IMR-90 (cell line): ENCODE measurements at regions of chr18 and their contacts with region 1.

Region 1: DNA sequence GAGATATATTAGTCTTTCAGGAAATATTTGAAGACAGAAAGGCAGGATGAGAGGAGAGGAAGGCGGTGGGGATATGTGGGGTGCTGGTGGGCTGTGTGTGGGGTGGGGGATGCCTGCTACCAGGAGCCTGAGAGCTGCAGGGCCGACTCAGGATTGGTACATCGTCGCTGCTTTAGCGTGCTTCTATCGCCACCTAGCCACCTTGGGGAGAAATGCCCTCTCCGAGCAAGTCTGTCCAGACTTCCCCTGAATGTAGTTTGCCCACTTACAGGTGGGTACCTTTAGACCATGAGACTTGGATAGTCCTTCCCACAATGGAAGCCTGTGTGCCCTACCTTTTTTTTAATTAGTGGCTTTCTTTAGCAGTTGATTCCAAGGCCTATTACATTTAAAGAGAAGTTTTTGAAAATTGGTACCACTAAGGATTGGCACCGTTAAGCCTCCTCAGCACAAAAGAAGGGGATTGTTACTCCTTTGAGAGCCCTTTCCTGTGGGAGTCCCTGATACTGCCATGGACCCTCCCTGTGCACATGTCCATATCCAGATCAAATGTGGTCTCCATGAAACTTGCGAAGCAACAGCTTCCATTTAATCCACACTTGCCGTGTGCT is 114.1 kb upstream of the NDUFV2 start:
- DNase-seq: peak; percentile 69
- ATAC-seq: peak; percentile 86
- H3K4me3 ChIP-seq: no peak overlapping the region
- H3K27ac ChIP-seq: no peak overlapping the region
- H3K4me1 ChIP-seq: peaks cover 14% of the 10 kb centered on the region
- H3K27me3 ChIP-seq: no peaks in the 10 kb centered on the region
- CTCF ChIP-seq: peak; percentile 89
- POLR2A ChIP-seq: peak; percentile 42; the same call in 1 of the 2 replicates
- RAD21 ChIP-seq: peak; percentile 98

Region 2: DNA sequence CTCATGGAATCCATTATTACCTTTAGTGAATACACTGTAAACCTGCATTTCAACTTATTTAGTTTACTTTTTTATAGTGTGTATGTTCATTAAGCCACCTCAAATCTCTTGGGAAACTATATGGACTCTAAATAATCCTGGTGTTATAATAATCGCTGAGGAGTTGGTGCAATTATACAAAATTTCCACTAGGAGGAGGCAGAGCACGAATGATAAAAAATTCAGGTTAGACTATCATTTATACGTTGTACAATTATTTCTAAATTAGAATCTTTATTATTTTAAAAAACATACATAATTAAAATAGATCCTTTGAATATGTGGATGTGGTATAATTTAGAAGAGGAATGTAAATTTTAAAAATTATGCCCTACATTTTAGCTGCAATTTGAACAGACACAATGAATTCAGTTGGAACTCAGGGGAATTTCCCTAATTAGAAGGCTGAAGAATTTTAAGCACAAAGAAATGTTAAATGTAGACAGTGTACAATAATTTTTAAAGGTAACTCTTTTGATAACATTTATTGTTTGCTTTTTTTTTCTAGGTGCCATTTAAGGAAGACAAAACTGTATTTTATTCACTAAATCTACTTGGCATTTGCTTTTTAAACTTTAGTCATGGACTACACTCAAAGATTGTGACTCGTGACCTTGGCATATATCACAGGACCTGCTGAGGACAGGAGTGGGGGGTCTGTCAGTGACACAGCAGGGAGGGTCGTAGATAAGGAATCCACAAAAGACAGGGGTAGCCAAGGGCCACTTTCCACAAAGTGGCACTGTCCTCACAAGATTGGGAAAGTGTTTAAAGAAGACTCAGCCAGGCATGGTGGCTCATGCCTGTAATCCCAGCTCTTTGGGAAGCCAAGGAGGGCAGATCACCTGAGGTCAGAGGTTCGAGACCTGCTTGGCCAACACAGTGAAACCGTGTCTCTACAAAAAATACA is 333.6 kb before region 1 on chr18:
- CTCF ChIA-PET with region 1: interaction called, 19 read pairs
- POLR2A ChIA-PET with region 1: no interaction called
- dilution Hi-C with region 1: no loop called
- in situ Hi-C with region 1: loop called (anchors 5 kb)
- intact Hi-C with region 1: loop called (anchors 1 kb)
- DNase-seq: peak; percentile 34
- ATAC-seq: peak; percentile 82
- H3K4me3 ChIP-seq: no peak overlapping the region
- H3K27ac ChIP-seq: no peak overlapping the region
- H3K4me1 ChIP-seq: peaks cover 2% of the 10 kb centered on the region
- H3K27me3 ChIP-seq: no peaks in the 10 kb centered on the region; the same call in 1 of the 2 replicates
- CTCF ChIP-seq: peak; percentile 88
- POLR2A ChIP-seq: no peak
- RAD21 ChIP-seq: peak; percentile 77

Region 3: GRCh38 chr18:8696749-8697211 is 291.6 kb before region 1 on chr18:
- CTCF ChIA-PET with region 1: interaction called, 4 read pairs
- POLR2A ChIA-PET with region 1: no interaction called
- dilution Hi-C with region 1: loop called (anchors 25 kb)
- in situ Hi-C with region 1: loop called (anchors 5 kb)
- intact Hi-C with region 1: loop called (anchors 1 kb)
- DNase-seq: peak; percentile 48
- ATAC-seq: peak; percentile 76
- H3K4me3 ChIP-seq: no peak overlapping the region
- H3K27ac ChIP-seq: no peak overlapping the region
- H3K4me1 ChIP-seq: peaks cover 7% of the 10 kb centered on the region
- H3K27me3 ChIP-seq: no peaks in the 10 kb centered on the region
- CTCF ChIP-seq: peak; percentile 81
- POLR2A ChIP-seq: no peak
- RAD21 ChIP-seq: peak; percentile 81

Region 4: GRCh38 chr18:8747440-8747937 is 240.9 kb before region 1 on chr18:
- CTCF ChIA-PET with region 1: no interaction called
- POLR2A ChIA-PET with region 1: no interaction called
- dilution Hi-C with region 1: no loop called
- in situ Hi-C with region 1: no loop called
- intact Hi-C with region 1: loop called (anchors 5 kb)
- DNase-seq: peak; percentile 96
- ATAC-seq: peak; percentile 76
- H3K4me3 ChIP-seq: no peak overlapping the region
- H3K27ac ChIP-seq: peak overlapping the region; percentile 96
- H3K4me1 ChIP-seq: peaks cover 56% of the 10 kb centered on the region
- H3K27me3 ChIP-seq: no peaks in the 10 kb centered on the region
- CTCF ChIP-seq: no peak
- POLR2A ChIP-seq: peak; percentile 67
- RAD21 ChIP-seq: no peak

Region 5: GRCh38 chr18:8882632-8883408 is 105.5 kb before region 1 on chr18:
- CTCF ChIA-PET with region 1: no interaction called
- POLR2A ChIA-PET with region 1: no interaction called
- dilution Hi-C with region 1: no loop called
- in situ Hi-C with region 1: no loop called
- intact Hi-C with region 1: no loop called
- DNase-seq: no peak
- ATAC-seq: no peak
- H3K4me3 ChIP-seq: no peak overlapping the region
- H3K27ac ChIP-seq: no peak overlapping the region
- H3K4me1 ChIP-seq: no peaks in the 10 kb centered on the region
- H3K27me3 ChIP-seq: no peaks in the 10 kb centered on the region
- CTCF ChIP-seq: no peak
- POLR2A ChIP-seq: no peak
- RAD21 ChIP-seq: no peak; the same call in 1 of the 2 replicates

Region 6: GRCh38 chr18:8899000-8899399 is 89.4 kb before region 1 on chr18:
- CTCF ChIA-PET with region 1: no interaction called
- POLR2A ChIA-PET with region 1: no interaction called
- dilution Hi-C with region 1: no loop called
- in situ Hi-C with region 1: no loop called
- intact Hi-C with region 1: no loop called
- DNase-seq: no peak
- ATAC-seq: no peak
- H3K4me3 ChIP-seq: no peak overlapping the region
- H3K27ac ChIP-seq: no peak overlapping the region
- H3K4me1 ChIP-seq: no peaks in the 10 kb centered on the region
- H3K27me3 ChIP-seq: no peaks in the 10 kb centered on the region
- CTCF ChIP-seq: no peak
- POLR2A ChIP-seq: no peak
- RAD21 ChIP-seq: no peak

Region 7: DNA sequence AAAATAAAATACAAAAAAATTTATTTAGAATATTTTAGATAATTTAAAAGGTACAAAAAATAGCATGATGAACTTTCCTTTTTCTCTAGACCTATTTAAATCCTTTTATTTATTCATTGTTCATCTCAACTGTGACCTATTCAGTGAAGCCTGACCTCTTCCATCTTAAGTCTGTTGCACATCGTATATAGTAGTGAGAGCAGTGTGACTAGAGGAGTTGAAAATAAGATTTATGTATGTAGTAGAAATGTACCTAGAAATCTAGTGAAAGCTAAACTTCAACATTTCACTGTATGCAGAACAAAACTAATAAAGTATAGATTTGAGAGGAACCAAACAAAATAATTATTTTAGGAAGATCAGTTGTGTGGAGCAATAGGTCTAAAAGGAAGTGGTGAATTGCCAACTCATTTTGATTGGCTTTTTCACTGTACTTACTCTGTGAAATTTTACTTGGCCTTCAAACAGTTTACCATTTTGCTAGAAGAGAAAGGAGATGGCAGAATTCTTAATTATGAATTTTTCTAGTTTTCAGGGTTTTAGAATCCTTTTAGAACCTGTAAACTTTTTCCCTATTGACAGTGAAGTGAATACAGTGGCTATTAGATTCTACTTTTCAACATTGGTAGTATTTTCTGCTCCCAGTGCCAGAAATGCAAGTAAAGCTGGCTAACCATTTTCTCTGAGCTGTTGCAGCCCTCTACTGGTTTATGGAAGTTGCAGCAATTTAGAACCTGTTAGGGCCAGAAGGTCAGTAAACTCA is 159.3 kb after region 1 on chr18:
- CTCF ChIA-PET with region 1: no interaction called
- POLR2A ChIA-PET with region 1: no interaction called
- dilution Hi-C with region 1: no loop called
- in situ Hi-C with region 1: no loop called
- intact Hi-C with region 1: loop called (anchors 10 kb)
- DNase-seq: peak; percentile 81
- ATAC-seq: peak; percentile 84
- H3K4me3 ChIP-seq: no peak overlapping the region
- H3K27ac ChIP-seq: no peak overlapping the region
- H3K4me1 ChIP-seq: peaks cover 7% of the 10 kb centered on the region
- H3K27me3 ChIP-seq: no peaks in the 10 kb centered on the region
- CTCF ChIP-seq: peak; percentile 80
- POLR2A ChIP-seq: no peak
- RAD21 ChIP-seq: peak; percentile 83